Psoas muscle (tissue), 8 donors: ENCODE measurements at regions of chr15 and their contacts with region 1.

Region 1: DNA sequence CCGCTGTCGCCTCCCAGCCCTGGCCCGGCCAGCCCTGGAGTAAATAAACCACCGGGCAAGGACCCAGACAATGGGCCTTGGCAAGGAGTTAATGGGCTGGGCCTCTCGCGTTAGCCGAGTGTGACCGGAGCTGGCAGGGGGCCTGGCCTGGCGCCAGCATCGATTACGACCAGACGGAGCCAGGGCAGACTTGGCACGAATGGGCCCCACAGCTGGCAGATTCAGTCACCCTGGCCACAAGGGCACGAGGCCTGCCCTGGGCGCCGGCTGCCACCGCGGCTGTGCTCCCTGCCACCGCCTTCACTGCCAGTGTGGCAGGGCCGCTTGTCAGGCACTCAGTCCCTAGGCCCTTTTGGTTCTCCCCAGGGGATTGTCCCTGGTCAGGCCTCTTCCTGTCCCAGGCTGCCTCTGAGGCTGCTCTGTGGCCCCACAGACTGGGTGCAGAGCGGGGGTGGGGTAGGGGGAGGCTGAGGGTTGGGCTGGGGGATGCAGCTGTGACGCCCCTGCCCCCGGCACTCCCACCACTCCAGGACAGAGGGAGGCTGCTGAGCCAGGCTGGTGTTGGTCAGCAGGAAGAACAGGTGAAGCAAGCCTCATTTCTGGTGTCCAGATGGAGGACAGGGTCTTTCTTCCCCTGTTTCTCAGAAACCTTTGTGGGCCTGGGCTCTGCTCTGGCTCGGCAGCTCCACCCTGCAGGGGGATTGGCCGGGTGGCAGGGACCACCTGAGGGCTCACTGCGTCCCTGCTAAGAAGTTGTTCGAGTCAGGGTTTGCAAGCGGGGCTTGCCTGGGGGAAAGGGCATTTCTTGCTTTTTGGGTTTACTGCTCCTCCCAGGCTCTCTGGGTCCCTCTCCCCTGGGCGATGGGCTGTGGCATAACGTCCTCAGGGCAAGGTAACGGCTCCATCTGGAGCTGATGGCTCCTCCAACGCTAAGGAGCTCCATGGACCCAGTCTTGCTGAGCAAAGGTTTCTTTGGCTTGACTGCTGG is 30.5 kb upstream of the SRP14 start:
- DNase-seq: peak; percentile 93 to 98
- ATAC-seq: peak; percentile 95 to 98 (median 96)
- H3K4me3 ChIP-seq: no peak overlapping the region
- H3K27ac ChIP-seq: peak overlapping the region; percentile 78
- H3K4me1 ChIP-seq: peaks cover 28% of the 10 kb centered on the region
- H3K27me3 ChIP-seq: no peaks in the 10 kb centered on the region
- CTCF ChIP-seq: no peak

Region 2: DNA sequence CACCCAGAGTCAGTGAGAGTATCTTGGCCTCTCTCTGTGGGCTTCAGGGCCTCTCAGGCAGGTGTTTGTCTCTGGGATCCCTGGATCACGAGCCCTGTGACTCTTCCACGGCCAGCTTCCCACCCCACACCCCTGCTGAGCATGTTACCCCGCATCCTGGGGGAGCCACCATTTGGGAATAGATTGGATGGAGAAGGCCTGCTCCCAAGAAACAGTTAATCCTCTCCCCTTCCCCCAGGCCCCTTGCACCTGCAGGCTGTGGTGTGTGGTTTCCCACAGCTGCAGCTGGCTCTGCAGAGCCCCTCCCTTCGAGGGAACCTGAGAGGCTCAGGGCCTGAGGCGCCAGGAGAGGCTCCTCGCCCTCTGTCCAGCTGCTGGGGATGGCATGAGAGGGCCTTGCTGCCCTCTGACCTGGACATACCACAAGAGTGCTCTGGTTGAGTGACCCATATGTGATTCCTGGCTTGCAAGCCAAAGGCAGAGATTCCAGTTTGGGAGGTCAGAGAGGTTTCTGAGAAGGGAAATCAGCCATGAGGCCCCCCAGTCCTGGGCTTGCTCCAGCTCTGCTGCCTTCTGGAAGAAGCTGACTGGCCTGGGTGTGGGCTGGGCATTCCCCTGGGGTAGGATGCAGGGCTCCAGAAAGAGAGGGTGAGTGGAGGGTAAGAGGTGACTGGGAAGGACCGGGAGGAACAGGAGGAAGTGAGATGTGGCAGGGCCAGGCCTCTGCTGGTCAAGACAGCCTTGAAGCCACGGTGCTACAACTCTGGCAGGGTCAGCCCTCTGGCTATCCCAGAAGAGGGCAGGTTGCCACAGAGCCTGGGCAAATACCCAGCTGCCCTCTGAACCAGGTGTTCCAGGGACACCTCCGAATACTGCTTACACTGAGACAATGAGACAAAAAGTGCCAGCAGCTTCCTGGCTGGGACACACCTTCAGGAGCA is 14.6 kb before region 1 on chr15:
- intact Hi-C with region 1: no loop called
- DNase-seq: peak in 1 of 2 donors; percentile 72
- ATAC-seq: peak; percentile 77 to 89 (median 82)
- H3K4me3 ChIP-seq: no peak overlapping the region
- H3K27ac ChIP-seq: peak overlapping the region; percentile 73
- H3K4me1 ChIP-seq: peaks cover 43% of the 10 kb centered on the region
- H3K27me3 ChIP-seq: no peaks in the 10 kb centered on the region
- CTCF ChIP-seq: no peak

Region 3: GRCh38 chr15:40108855-40109735 is 39.6 kb after region 1 on chr15 and contains the start of gene BMF:
- intact Hi-C with region 1: loop called (anchors 2 to 5 kb)
- DNase-seq: peak; percentile 100
- ATAC-seq: peak; percentile 84 to 88 (median 85)
- H3K4me3 ChIP-seq: peak within 1 kb of the TSS; percentile 80
- H3K27ac ChIP-seq: peak within 1 kb of the TSS; percentile 91
- H3K4me1 ChIP-seq: peaks cover 33% of the 10 kb centered on the region
- H3K27me3 ChIP-seq: no peaks in the 10 kb centered on the region
- CTCF ChIP-seq: no peak
- total RNA-seq, gene BMF: 1.5 to 5.9 (median 3.7) TPM

Region 4: GRCh38 chr15:40150163-40150925 is 80.9 kb after region 1 on chr15:
- intact Hi-C with region 1: loop called in 1 of 2 experiments (anchors 5 kb)
- DNase-seq: peak; percentile 45 to 68
- ATAC-seq: peak; percentile 84 to 96 (median 89)
- H3K4me3 ChIP-seq: no peak overlapping the region
- H3K27ac ChIP-seq: peak overlapping the region; percentile 75
- H3K4me1 ChIP-seq: peaks cover 19% of the 10 kb centered on the region
- H3K27me3 ChIP-seq: no peaks in the 10 kb centered on the region
- CTCF ChIP-seq: no peak

Region 5: GRCh38 chr15:40716165-40716564 is 646.7 kb after region 1 on chr15:
- intact Hi-C with region 1: no loop called
- DNase-seq: no peak
- ATAC-seq: no peak
- H3K4me3 ChIP-seq: no peak overlapping the region
- H3K27ac ChIP-seq: no peak overlapping the region
- H3K4me1 ChIP-seq: no peaks in the 10 kb centered on the region
- H3K27me3 ChIP-seq: no peaks in the 10 kb centered on the region
- CTCF ChIP-seq: no peak